Activated naive CD4-positive, alpha-beta T cell treated with anti-CD3 and anti-CD28 coated beads for 36 hours (primary cell): ENCODE measurements at regions of chr3 and their contacts with region 1.

Region 1: GRCh38 chr3:47475570-47476329 is at the start of gene SCAP:
- DNase-seq: peak; percentile 96
- H3K4me3 Mint-ChIP-seq: peak within 1 kb of the TSS; percentile 86
- H3K27ac Mint-ChIP-seq: peak within 1 kb of the TSS; percentile 83
- H3K4me1 Mint-ChIP-seq: peaks cover 35% of the 10 kb centered on the region
- H3K27me3 Mint-ChIP-seq: no peaks in the 10 kb centered on the region
- total RNA-seq, gene SCAP: 31.6 to 34.7 TPM

Region 2: DNA sequence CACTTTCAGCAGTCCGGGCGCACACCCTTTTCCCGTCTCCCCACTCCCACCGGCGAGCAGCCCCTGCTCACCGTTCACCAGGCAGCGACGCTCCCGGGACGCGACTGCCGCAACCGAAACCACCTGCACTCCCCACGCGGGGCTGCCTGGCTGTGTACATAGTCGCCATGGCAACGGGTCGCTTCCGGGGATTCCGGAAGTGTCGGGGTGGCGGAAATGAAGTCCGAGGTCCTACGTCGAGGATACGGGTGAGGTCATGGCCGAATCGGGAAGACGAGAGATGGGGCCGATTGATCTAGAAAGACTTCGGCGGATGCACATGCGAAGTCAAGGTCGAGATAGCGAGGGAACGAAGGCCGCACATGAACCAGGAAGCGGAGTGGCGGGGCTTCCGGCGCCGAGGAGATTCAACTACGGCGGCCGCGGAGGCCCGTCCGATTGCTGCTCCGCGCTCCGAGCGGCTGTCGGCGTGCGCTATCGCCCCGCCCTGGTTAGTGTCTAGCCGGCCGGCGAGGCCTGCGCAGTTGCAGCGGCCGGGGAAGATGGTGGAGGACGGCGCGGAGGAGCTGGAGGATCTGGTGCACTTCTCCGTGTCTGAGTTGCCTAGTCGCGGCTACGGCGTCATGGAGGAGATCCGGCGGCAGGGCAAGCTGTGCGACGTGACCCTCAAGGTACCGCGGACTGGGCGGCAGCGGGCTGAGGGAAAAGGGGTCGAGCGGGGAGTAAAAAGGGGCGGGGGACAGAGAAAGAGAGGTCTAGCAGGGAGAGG is 193.1 kb before region 1 on chr3 and contains the starts of genes KIF9 and KLHL18:
- CTCF ChIA-PET with region 1: no interaction called
- intact Hi-C with region 1: loop called (anchors 5 kb)
- DNase-seq: peak; percentile 95
- H3K4me3 Mint-ChIP-seq: peak within 1 kb of the TSS; percentile 99
- H3K27ac Mint-ChIP-seq: peak within 1 kb of the TSS; percentile 99
- H3K4me1 Mint-ChIP-seq: peaks cover 42% of the 10 kb centered on the region
- H3K27me3 Mint-ChIP-seq: no peaks in the 10 kb centered on the region
- total RNA-seq, gene KIF9: 4.5 to 4.9 TPM
- total RNA-seq, gene KLHL18: 20.7 to 21.6 TPM

Region 3: GRCh38 chr3:47315069-47315647 is 160.6 kb before region 1 on chr3:
- CTCF ChIA-PET with region 1: no interaction called
- intact Hi-C with region 1: no loop called
- DNase-seq: no peak
- H3K4me3 Mint-ChIP-seq: no peak overlapping the region
- H3K27ac Mint-ChIP-seq: no peak overlapping the region
- H3K4me1 Mint-ChIP-seq: peaks cover 13% of the 10 kb centered on the region
- H3K27me3 Mint-ChIP-seq: no peaks in the 10 kb centered on the region

Region 4: GRCh38 chr3:47440131-47440530 is 35.6 kb before region 1 on chr3:
- CTCF ChIA-PET with region 1: no interaction called
- intact Hi-C with region 1: loop called (anchors 1 kb)
- DNase-seq: no peak
- H3K4me3 Mint-ChIP-seq: no peak overlapping the region
- H3K27ac Mint-ChIP-seq: peak overlapping the region; percentile 3
- H3K4me1 Mint-ChIP-seq: peaks cover 8% of the 10 kb centered on the region
- H3K27me3 Mint-ChIP-seq: no peaks in the 10 kb centered on the region

Region 5: GRCh38 chr3:47464588-47464987 is 11.2 kb before region 1 on chr3:
- CTCF ChIA-PET with region 1: interaction called, 5 read pairs
- intact Hi-C with region 1: loop called (anchors 1 kb)
- DNase-seq: no peak
- H3K4me3 Mint-ChIP-seq: no peak overlapping the region
- H3K27ac Mint-ChIP-seq: no peak overlapping the region
- H3K4me1 Mint-ChIP-seq: peaks cover 31% of the 10 kb centered on the region
- H3K27me3 Mint-ChIP-seq: no peaks in the 10 kb centered on the region

Region 6: DNA sequence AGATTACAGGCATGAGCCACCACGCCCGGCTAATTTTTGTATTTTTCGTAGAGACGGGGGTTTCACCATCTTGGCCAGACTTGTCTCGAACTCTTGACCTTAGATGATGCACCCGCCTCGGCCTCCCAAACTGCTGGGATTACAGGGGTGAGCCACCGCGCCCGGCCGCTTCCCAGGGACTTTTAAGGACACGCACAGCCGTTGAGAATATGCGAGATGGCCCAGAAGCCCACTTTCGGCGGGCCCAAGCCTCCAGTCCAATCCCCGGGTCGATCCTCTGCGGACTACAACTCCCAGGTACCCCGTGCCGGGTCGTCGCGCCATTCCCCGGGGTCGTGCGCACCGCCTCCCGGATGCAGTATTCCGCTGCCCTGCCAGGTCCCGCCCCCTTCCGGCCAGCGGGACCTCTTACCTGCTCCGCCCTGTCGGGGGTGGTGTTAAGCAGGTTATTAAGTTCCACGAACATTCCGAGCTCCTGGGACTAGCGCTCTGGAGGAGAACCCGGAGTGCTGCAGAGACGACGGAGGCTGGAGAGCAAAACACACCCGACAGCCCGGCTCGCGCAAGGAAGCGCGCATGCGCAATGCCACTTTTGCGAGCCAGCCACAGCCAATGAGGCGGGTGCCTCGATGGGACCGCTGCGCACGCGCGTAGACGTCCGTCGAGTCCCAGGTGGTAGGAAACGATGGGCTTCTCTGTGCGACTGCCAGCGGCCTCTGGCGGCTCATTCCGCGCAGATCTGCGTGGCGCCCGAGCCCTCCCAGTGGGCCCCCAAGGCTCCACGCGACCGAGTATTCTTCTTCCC is 37.6 kb after region 1 on chr3 and contains the start of gene ELP6:
- CTCF ChIA-PET with region 1: no interaction called
- intact Hi-C with region 1: loop called (anchors 1 kb)
- DNase-seq: peak; percentile 98
- H3K4me3 Mint-ChIP-seq: peak within 1 kb of the TSS; percentile 96
- H3K27ac Mint-ChIP-seq: peak within 1 kb of the TSS; percentile 97
- H3K4me1 Mint-ChIP-seq: peaks cover 15% of the 10 kb centered on the region
- H3K27me3 Mint-ChIP-seq: no peaks in the 10 kb centered on the region
- total RNA-seq, gene ELP6: 32.7 to 33.1 TPM

Region 7: GRCh38 chr3:47781685-47782445 is 306.1 kb after region 1 on chr3 and contains the start of gene SMARCC1:
- CTCF ChIA-PET with region 1: no interaction called
- intact Hi-C with region 1: loop called (anchors 2 kb)
- DNase-seq: peak; percentile 99
- H3K4me3 Mint-ChIP-seq: peak within 1 kb of the TSS; percentile 95
- H3K27ac Mint-ChIP-seq: peak within 1 kb of the TSS; percentile 92
- H3K4me1 Mint-ChIP-seq: peaks cover 21% of the 10 kb centered on the region
- H3K27me3 Mint-ChIP-seq: no peaks in the 10 kb centered on the region
- total RNA-seq, gene SMARCC1: 82.5 to 84.5 TPM

Region 8: GRCh38 chr3:47791193-47791855 is 315.6 kb after region 1 on chr3:
- CTCF ChIA-PET with region 1: no interaction called
- intact Hi-C with region 1: loop called (anchors 1 kb)
- DNase-seq: no peak
- H3K4me3 Mint-ChIP-seq: no peak overlapping the region
- H3K27ac Mint-ChIP-seq: no peak overlapping the region
- H3K4me1 Mint-ChIP-seq: no peaks in the 10 kb centered on the region
- H3K27me3 Mint-ChIP-seq: no peaks in the 10 kb centered on the region